ENCODE measurements at regions of chr1 and their contacts with region 1.

Region 1: DNA sequence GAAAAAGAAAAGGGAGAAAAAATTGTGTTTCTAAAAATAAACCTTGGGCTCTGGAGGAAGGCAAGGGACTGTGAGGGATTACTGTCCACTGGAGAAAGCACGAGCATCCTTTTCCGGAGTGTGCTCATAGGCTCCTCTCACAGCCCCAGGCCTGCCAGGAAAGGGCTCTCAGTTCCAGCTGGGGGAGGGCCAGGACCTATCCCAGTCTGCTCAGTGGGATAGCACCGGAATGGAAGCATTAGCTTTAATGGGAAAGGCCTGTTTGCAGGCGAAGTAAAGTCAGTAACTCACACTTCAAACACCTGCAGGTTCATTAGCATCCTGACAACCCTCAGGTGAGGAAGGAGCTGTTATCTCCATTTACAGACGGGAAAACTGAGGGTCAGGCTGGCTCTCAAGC is 113.9 kb upstream of the USP24 start:
- DNase-seq: no peak
- H3K4me3 ChIP-seq: no peak overlapping the region
- H3K27ac ChIP-seq: no peak overlapping the region
- H3K4me1 ChIP-seq: peaks cover 0 to 7% (median 0%) of the 10 kb centered on the region in 4 experiments; a peak in 2 of 7 replicates
- H3K27me3 ChIP-seq: no peaks in the 10 kb centered on the region
- CTCF ChIP-seq: no peak
- EP300 ChIP-seq: no peak
- POLR2A ChIP-seq: no peak
- RAD21 ChIP-seq: no peak

Region 2: DNA sequence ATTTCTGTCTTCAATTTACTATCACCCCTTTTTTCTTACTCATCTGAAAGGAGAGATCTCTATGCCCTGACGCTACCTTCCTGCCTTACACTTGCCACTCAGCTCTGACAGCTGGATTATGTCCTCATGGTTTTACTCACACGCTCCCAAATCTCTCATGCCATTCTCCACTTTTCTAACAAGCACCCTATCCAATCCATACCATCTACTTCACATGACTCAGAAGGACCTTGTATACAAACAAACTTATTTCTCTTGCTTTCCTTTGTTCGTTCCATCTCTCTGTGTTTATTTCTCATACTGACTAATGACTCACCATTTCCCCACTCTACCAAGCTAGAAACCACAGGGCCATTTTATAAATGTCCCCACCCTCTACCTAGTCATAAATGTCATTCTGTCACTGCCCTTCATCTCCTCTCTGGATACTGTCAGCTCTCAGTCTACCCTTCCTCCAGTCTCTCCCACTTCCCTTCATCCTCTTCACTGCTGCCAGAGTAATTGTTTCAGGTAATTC is 201.2 kb before region 1 on chr1:
- CTCF ChIA-PET with region 1: no interaction called
- POLR2A ChIA-PET with region 1: no interaction called
- DNase-seq: no peak
- H3K4me3 ChIP-seq: no peak overlapping the region
- H3K27ac ChIP-seq: no peak overlapping the region
- H3K4me1 ChIP-seq: no peaks in the 10 kb centered on the region
- H3K27me3 ChIP-seq: peaks cover 0 to 1% (median 0%) of the 10 kb centered on the region in 4 experiments; a peak in 1 of 7 replicates
- CTCF ChIP-seq: no peak
- EP300 ChIP-seq: no peak
- POLR2A ChIP-seq: no peak
- RAD21 ChIP-seq: no peak

Region 3: DNA sequence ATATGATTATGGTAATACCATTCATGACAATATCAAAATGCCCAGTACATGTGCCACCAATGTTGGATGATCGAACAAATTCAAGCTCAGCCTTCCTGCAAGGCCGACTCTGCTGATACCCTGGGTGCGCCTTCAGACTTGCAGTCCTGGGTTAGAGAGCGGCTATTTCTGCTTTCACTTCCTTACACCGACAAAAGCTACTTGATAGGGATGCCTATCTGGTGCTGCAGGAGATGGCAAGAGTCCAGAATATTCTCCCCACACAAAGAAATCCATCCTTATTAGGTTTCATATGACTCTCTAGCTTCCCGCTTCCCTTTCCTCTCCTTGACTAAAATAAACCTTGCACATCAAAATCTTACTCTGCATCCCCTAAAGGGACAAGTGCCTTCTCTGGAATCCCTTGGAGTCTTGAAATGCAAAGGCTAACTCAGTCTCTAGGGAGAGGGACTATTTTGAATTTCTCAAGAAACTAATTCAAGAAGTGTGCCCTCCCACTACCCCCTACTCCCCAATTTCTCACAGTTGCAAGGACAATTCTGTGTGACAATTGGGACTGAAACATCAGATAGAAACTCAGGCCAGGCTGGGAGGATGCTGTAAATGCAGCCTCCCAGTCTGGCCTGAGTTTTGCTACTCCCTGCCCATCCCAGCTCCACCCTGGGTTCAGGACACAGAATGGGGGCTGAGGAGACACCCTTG is 10.8 kb before region 1 on chr1:
- CTCF ChIA-PET with region 1: interaction called, 17 read pairs
- POLR2A ChIA-PET with region 1: interaction called, 4 read pairs
- DNase-seq: no peak
- H3K4me3 ChIP-seq: no peak overlapping the region
- H3K27ac ChIP-seq: no peak overlapping the region
- H3K4me1 ChIP-seq: peaks cover 0 to under 1% (median 0%) of the 10 kb centered on the region in 4 experiments; a peak in 2 of 7 replicates
- H3K27me3 ChIP-seq: peaks cover 0 to 3% (median 0%) of the 10 kb centered on the region in 4 experiments; a peak in 2 of 7 replicates
- CTCF ChIP-seq: no peak
- EP300 ChIP-seq: no peak
- POLR2A ChIP-seq: no peak
- RAD21 ChIP-seq: no peak